ENCODE measurements at regions of chr10 and their contacts with region 1.

Region 1: DNA sequence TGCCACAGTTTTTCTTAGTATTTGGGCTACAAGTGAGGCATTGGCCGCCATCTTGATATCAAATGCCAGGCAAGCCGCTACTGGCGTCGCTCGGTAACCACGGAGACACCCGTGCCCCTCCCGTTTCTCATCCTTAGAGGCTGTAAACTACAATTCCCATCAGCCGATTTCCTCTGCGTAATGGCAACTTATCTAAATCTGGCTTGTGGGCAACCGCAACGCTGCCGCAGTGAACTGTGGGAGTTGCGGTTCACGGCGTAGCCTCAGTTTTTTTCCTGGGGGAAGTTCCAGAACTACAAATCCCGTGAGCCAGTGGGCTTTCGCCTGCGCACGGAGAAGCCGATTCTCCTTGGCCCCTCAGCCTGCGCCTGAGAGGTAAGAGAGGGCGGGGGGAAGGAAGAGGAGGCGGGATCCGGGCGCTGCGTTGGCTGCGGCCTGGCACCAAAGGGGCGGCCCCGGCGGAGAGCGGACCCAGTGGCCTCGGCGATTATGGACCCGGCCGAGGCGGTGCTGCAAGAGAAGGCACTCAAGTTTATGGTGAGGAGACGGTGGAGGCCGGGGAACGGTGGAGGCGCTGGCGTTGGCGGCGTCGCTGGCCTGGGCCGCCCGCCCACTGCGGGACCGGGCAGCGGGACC is at the start of gene BTRC:
- DNase-seq: peak; percentile 96
- H3K4me3 Mint-ChIP-seq: peak within 1 kb of the TSS; percentile 96
- H3K27ac Mint-ChIP-seq: peak within 1 kb of the TSS; percentile 98
- H3K4me1 Mint-ChIP-seq: peaks cover 32% of the 10 kb centered on the region
- H3K27me3 Mint-ChIP-seq: peaks cover 17% of the 10 kb centered on the region
- total RNA-seq, gene BTRC: 19.7 and 22.2 TPM in 2 replicates

Region 2: DNA sequence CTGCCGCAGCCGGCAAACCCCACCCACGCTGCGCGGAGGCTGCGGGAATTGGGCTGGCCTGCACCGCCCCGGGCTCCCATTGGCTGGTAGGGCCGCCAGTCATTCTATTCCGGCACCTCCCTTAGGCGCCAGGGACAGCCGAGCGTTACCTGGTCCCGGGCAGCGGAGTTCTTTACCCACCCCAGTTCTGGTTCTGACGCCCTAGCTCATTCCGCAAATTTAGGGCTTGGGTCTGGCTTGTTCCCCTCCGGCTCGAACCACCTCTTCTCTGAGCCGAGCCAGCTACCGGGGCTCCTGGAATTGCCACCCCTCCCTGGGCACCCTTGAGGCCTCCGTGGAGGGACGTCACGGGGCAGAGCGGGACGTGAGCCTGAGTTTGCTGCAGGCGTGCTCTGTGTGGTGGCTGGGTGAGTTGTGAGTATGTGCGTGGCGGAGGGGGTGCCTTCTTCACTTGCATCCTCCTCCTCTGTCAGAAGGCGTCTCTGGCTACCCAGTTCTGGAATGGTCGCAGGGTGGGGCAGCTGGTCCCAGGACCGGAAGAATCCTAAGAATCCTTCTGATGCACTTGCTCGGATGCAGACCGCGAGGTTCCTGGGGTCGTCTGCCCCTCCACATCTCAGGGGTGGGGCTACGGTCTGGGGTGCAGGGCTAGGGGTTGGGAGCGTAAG is 322.5 kb before region 1 on chr10 and contains the starts of genes PDZD7 and SFXN3:
- intact Hi-C with region 1: loop called (anchors 2 kb)
- DNase-seq: peak; percentile 94
- H3K4me3 Mint-ChIP-seq: peak within 1 kb of the TSS; percentile 84
- H3K27ac Mint-ChIP-seq: peak within 1 kb of the TSS; percentile 94
- H3K4me1 Mint-ChIP-seq: peaks cover 27% of the 10 kb centered on the region
- H3K27me3 Mint-ChIP-seq: peaks cover 21% of the 10 kb centered on the region
- total RNA-seq, gene PDZD7: 0.47 and 0.54 TPM in 2 replicates
- total RNA-seq, gene SFXN3: 34.8 and 39.0 TPM in 2 replicates

Region 3: DNA sequence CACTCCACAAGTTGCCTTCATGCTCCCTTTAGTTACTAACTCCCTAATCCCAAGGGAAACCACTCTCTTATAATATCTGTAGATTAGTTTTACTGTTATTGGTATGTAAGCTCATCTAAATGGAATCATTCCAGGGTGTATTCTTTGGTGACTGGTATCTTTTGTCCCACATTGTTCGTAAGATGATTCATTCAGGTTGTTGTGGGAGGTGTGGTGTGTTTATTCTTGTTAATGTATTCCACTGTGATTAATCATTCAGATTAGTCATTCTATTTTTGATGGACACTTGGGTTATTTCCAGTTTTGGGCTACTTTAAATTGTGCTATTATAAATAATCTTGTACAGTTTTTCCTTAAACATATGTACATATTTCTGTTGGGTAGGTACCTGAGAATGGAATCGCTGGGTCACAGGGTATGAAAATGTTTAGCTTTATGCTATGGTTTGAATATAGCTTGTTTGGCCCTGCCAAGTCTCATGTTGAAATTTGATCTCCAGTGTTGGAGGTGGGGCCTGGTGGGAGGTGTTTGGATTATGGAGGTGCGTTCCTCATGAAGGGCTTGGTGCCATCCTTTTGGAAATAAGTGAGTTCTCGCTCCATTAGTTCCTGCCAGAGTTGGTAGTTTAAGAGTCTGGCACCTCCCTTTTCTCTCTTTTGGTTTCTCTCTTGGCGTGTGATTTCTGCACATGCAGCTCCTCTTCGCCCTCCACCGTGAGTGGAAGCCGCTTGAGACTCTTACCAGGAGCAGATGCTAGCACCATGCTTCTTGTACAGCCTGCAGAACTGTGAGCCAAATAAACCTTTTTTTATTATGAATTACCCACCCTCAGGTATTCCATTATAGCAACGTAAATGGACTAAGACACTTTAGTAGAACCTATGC is 14.0 kb after region 1 on chr10:
- intact Hi-C with region 1: loop called (anchors 1 kb)
- DNase-seq: no peak
- H3K4me3 Mint-ChIP-seq: no peak overlapping the region
- H3K27ac Mint-ChIP-seq: peak overlapping the region; percentile 29
- H3K4me1 Mint-ChIP-seq: peaks cover 11% of the 10 kb centered on the region
- H3K27me3 Mint-ChIP-seq: no peaks in the 10 kb centered on the region

Region 4: DNA sequence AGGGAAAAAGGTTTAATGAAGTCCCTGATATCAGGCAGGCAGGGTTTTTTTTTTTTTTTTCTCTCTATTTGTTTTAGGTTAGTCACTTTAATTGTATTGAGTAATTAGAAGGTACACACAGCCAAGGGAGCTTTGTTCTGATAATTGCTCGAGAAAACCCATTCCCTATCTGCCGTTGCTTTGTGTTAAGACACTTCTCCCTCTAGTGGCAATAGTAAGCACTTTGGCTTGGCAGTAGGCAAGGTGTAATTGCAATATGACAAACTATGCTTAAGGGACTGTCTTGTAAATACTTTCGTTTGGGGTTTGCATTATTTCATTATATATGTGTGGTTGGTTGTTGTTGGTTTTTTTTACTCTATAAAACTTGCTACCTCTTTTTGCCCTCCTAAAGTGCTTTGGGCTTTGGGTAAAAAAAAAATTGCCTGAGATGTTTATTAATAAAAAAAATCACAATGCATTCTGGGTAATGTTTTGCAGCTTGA is 113.5 kb after region 1 on chr10:
- intact Hi-C with region 1: loop called (anchors 1 kb)
- DNase-seq: peak; percentile 19
- H3K4me3 Mint-ChIP-seq: no peak overlapping the region
- H3K27ac Mint-ChIP-seq: no peak overlapping the region
- H3K4me1 Mint-ChIP-seq: peaks cover 10% of the 10 kb centered on the region
- H3K27me3 Mint-ChIP-seq: no peaks in the 10 kb centered on the region

Region 5: GRCh38 chr10:101782811-101783735 is 429.3 kb after region 1 on chr10 and contains the start of gene NPM3:
- intact Hi-C with region 1: loop called (anchors 5 kb)
- DNase-seq: peak; percentile 78
- H3K4me3 Mint-ChIP-seq: peak within 1 kb of the TSS; percentile 100
- H3K27ac Mint-ChIP-seq: peak within 1 kb of the TSS; percentile 99
- H3K4me1 Mint-ChIP-seq: peaks cover 59% of the 10 kb centered on the region
- H3K27me3 Mint-ChIP-seq: peaks cover 5% of the 10 kb centered on the region
- total RNA-seq, gene NPM3: 149 and 151 TPM in 2 replicates

Region 6: GRCh38 chr10:103192451-103193106 is 1838.8 kb after region 1 on chr10:
- intact Hi-C with region 1: loop called (anchors 5 kb)
- DNase-seq: peak; percentile 64
- H3K4me3 Mint-ChIP-seq: peak overlapping the region; percentile 96
- H3K27ac Mint-ChIP-seq: peak overlapping the region; percentile 99
- H3K4me1 Mint-ChIP-seq: peaks cover 45% of the 10 kb centered on the region
- H3K27me3 Mint-ChIP-seq: no peaks in the 10 kb centered on the region

Measured in activated T-helper 1 cell treated with anti-CD3 and anti-CD28 coated beads, Interleukin-12 subunit alpha, Interleukin-12 subunit beta, Interleukin-2, Interleukin-4 antibody, amounts not matched to agents 30 ng/mL and 10 ng/mL and 1 ng/mL, durations not matched to agents 14 hours and 24 hours and 36 hours (primary cell).